ENCODE measurements at regions of chr20 and their contacts with region 1.

Region 1: GRCh38 chr20:3407771-3408637 is 535 bp upstream of the DNAAF9 start:
- DNase-seq: peak in 1 of 2 donors; percentile 84
- H3K4me3 ChIP-seq: peak overlapping the region; percentile 89 to 93
- H3K27ac ChIP-seq: peak overlapping the region; percentile 95
- H3K4me1 ChIP-seq: peaks cover 0 to 7% of the 10 kb centered on the region in 2 donors
- H3K27me3 ChIP-seq: no peaks in the 10 kb centered on the region
- CTCF ChIP-seq: no peak

Region 2: GRCh38 chr20:2873010-2873746 is 534.8 kb before region 1 on chr20 and contains the start of gene PTPRA:
- intact Hi-C with region 1: loop called (anchors 5 kb)
- DNase-seq: peak; percentile 71 to 94
- H3K4me3 ChIP-seq: peak within 1 kb of the TSS; percentile 81 to 96
- H3K27ac ChIP-seq: peak within 1 kb of the TSS; percentile 62 to 66
- H3K4me1 ChIP-seq: peaks cover 4 to 8% of the 10 kb centered on the region in 2 donors
- H3K27me3 ChIP-seq: no peaks in the 10 kb centered on the region
- CTCF ChIP-seq: no peak
- total RNA-seq, gene PTPRA: 24.2 TPM

Region 3: DNA sequence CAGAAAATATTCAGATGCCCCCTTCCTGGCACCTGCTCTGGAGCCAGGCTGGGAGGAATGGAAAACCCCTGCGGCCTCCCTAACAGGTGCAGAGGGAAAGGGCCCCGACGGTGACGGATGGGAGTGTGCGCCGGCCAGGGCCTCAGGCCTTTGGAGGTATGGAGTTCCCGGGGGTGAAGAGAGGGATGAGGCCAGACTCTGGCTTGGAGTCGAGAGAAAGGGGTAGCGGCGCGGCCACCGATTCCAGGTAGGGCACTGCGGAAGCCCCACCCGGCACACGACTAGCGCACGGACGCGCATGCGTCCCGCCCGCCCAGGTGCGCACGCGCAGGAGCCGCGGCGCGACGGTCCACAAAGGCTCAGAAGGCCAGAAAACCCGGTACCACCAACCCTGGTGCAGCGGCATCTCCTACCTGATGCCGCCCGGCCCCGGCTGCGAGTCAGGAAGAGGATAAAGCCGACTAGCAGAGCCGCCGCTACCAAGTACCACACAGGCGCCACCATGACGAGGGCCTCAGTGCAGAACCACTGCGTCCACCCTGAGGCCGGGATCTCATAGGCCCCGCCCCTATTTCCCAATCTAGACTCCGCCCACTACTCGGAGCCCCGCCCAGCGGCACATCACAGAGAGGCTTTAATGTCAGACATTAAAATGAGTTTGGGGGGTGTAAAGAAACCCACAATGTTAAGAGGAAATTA is 203.7 kb before region 1 on chr20 and contains the start of gene DDRGK1:
- intact Hi-C with region 1: loop called (anchors 10 kb)
- DNase-seq: peak; percentile 51 to 94
- H3K4me3 ChIP-seq: peak within 1 kb of the TSS; percentile 72 to 90
- H3K27ac ChIP-seq: peak within 1 kb of the TSS; percentile 78 to 89
- H3K4me1 ChIP-seq: peaks cover 7 to 10% of the 10 kb centered on the region in 2 donors
- H3K27me3 ChIP-seq: no peaks in the 10 kb centered on the region
- CTCF ChIP-seq: no peak
- total RNA-seq, gene DDRGK1: 18.0 TPM

Region 4: GRCh38 chr20:3276680-3277015 is 131.4 kb before region 1 on chr20:
- intact Hi-C with region 1: no loop called
- DNase-seq: no peak
- H3K4me3 ChIP-seq: no peak overlapping the region
- H3K27ac ChIP-seq: no peak overlapping the region
- H3K4me1 ChIP-seq: no peaks in the 10 kb centered on the region
- H3K27me3 ChIP-seq: no peaks in the 10 kb centered on the region
- CTCF ChIP-seq: peak in 1 of 3 experiments; percentile 6

Region 5: DNA sequence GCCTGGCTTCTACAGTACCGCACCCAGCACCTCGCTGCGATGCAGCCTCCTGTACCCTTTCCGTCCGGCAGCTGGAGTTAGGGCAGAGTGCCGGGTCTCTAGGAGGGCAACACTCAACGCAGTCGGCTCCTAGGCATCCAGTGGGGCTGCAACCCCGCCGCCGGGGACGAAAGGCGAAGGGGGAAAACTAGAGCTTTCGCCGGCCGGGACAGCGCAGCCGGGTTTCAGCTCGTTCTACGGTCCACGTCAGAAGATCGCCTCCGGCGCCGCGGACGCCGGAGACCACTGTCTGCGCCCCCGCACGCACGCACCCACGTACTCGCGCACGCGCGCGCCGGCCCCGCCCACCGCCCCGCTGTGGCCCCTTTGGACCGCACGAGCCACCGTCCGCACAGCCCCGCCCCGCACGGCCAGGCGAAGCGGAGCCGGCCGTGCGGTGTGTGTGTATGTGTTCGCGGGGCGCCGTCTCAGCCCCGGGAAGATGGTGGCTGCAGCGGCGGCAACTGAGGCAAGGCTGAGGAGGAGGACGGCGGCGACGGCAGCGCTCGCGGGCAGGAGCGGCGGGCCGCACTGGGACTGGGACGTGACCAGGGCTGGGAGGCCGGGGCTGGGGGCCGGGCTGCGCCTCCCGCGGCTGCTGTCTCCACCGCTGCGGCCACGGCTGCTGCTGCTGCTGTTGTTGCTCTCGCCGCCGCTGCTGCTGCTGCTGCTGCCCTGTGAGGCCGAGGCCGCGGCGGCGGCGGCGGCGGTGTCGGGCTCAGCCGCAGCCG is 62.8 kb after region 1 on chr20 and contains the start of gene ATRN:
- intact Hi-C with region 1: loop called (anchors 2 kb)
- DNase-seq: peak; percentile 55 to 94
- H3K4me3 ChIP-seq: peak within 1 kb of the TSS; percentile 93 to 99
- H3K27ac ChIP-seq: peak within 1 kb of the TSS; percentile 70 to 85
- H3K4me1 ChIP-seq: peaks cover 12 to 23% of the 10 kb centered on the region in 2 donors
- H3K27me3 ChIP-seq: no peaks in the 10 kb centered on the region
- CTCF ChIP-seq: no peak
- total RNA-seq, gene ATRN: 8.6 TPM